GM10248 (cell line): ENCODE measurements at regions of chr2 and their contacts with region 1.

Region 1: GRCh38 chr2:218852911-218853667 is 6.5 kb upstream of the WNT6 start:
- DNase-seq: peak; percentile 65
- CTCF ChIP-seq: peak; percentile 88

Region 2: DNA sequence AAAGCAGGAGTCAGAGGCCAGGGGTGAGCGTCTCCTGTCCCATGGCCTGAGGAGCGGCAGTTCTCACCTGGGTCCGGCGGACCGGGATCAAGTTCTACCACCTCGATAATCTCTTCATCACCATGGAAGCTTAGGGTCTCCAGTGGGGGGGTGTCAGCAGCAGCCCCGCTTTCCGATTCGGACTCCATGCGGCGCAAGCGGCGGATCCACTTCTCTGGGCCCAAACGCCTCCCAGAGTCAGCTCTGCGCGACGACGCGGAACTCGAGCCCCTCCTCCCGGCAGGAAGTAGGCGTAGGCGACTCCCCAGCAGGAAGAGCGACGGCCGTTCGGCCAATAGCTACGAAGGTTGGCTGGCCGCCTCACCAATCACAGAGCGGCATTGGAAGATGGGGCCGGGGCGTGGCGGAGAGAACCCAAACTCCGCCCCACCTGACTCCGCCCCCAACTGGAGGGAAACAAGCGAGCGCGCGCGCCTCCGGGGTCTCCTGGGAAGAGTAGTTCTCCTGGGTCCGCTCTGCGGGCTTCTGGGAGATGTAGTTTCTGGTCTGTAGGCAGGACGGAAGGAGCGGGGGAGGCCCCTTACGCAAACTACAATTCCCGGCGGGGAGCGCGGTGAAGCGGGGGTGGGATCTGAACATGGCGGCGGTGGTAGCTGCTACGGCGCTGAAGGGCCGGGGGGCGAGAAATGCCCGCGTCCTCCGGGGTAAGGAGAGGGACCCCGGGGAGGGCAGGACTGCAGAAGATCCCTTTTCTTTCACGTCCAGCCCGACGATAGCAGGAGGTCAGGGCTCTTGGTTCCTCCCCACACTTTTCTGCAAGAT is 583.0 kb before region 1 on chr2 and contains the starts of genes AAMP and PNKD:
- CTCF ChIA-PET with region 1: interaction called, 34 read pairs
- POLR2A ChIA-PET with region 1: no interaction called
- DNase-seq: peak; percentile 99
- CTCF ChIP-seq: no peak

Region 3: DNA sequence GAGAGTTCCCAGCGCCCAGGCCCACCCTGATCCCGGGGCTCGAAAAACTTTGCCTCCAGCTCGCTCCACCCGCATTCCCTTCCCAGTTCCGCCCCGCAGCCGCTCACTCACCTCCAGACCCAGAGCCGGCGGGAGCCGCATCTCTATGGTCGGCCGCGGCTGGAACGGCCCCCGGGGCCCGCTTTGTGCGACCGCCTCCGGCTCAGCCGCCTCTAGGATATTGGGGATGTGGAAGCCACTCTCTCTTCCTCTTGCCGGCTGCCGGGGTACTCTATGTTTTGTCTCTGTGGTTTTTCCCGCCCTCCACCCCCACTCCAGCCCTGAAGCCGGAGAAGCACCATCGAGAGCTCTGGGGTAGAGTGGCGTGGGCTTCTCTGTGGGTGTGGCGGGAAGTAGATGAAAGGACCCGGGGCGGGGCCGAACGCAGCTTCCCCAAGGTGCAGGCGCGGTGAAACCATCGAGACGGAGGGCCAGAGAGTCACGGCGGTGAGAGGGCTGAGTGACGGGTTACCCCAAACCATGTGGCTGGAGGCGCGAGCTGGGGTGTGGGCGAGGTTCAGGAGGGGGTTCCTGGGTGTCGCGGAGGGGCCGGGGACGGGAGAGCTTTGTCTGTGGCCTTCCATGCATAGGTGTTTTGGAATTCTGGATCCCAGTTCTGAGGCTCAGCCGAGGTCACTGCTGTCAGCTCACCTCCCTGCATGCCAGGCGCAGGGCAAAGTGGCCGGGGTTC is 193.7 kb before region 1 on chr2 and contains the starts of genes BCS1L and ZNF142:
- CTCF ChIA-PET with region 1: interaction called, 61 read pairs
- POLR2A ChIA-PET with region 1: no interaction called
- DNase-seq: peak; percentile 96
- CTCF ChIP-seq: no peak

Region 4: DNA sequence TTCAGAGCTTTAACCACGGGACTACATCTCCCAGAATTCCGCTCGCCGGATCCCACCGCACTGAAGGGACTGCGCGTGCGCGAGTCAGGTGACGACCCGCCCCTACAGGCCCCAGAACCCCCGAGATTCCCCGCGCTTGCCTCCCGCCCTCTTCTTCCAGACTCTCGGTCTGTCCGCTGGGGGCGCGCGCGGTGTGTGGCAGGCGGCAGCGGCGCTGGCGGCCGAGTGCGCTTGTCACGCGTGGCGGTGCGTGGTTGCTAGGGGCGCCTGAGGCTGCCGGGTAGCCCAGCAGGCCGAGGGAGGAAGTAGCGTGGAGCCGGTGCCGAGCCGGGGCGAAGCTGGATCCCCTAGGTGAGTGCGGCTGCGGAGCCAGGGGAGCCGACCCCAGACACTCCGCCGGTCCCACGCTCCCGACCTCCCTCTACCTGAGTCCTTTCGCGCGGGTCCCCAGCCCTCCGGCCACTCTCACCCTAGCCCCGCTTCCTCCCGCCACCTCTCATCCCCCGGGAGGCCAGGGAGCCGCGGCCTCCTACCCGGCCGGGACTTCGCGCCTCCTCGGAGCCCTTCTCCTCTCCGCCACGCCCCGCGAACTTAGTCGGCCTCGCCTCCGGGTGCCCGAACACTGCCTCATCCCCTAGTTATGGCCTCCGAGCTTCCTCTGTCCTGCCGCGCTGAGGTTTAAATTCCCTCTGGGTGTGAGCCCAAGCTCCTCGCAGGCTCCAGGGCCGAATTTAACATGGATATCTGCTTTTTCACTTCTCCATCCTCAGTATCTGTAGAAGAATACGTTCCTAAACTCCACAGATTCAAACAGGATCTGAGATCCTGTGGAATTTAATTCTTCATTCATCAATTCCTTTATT is 142.2 kb before region 1 on chr2 and contains the start of gene TTLL4:
- CTCF ChIA-PET with region 1: interaction called, 11 read pairs
- POLR2A ChIA-PET with region 1: no interaction called
- DNase-seq: peak; percentile 99
- CTCF ChIP-seq: peak; percentile 93

Region 5: GRCh38 chr2:218839430-218839829 is 13.7 kb before region 1 on chr2:
- CTCF ChIA-PET with region 1: interaction called, 21 read pairs
- POLR2A ChIA-PET with region 1: no interaction called
- DNase-seq: no peak
- CTCF ChIP-seq: no peak

Region 6: DNA sequence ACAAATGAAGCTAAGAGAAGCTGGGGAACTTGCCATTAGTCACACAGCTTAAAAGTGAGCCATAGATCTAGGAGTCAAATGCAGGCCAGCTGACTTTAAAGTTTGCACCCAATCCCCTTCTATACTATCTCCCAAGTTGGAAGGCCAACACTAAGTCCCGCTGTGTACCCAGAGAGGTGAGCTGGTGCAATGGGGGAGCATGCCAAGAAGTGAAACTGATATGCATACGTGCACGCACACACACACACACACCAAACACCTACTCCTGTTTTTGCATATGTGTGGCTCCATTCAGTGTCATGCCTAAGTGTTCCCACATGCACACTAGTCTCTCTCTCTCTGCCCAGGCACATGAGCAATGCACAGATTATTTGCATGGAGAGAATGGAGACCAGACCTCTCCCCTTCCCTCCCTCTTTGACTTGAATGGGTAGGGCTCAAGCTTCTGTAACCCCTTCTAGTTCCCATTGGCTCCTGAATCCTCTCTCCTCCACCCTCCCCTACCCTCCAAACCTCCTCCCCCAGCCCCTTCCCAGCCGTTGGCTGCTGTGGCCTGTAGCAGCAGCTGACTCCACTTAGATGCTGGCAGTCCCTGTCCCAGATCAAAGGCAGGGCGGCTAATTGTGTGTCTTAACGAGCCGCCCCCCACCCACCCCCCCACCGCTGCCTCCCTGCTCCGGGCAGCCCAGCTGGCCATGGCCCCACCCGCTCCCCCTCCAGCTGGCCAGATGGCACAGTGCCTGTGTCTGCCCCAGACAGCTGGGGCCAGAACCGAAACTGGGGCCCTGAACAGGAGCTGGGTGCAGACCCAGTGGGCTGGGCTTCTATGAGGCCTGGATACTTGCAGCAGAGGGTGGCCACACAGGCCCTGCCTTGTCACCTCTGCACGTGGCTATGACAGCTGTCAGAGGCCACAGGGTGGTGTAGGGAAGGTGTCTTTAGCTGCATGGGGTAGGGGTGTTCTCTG is 33.2 kb after region 1 on chr2:
- CTCF ChIA-PET with region 1: interaction called, 10 read pairs
- POLR2A ChIA-PET with region 1: no interaction called
- DNase-seq: peak; percentile 69
- CTCF ChIP-seq: no peak